ENCODE measurements at regions of chr6 and their contacts with region 1.

Region 1: GRCh38 chr6:148250975-148251685 is 91.5 kb upstream of the SASH1 start:
- DNase-seq: no peak
- H3K4me3 ChIP-seq: no peak overlapping the region
- H3K27ac ChIP-seq: peak overlapping the region; percentile 57 to 81 (median 61)
- H3K4me1 ChIP-seq: peaks cover 39 to 42% of the 10 kb centered on the region in 2 donors
- H3K27me3 ChIP-seq: no peaks in the 10 kb centered on the region
- CTCF ChIP-seq: peak in 4 of 6 experiments; percentile 51 to 65 (median 56)
- POLR2A ChIP-seq: no peak

Region 2: GRCh38 chr6:148177589-148178233 is 73.4 kb before region 1 on chr6:
- intact Hi-C with region 1: loop called (anchors 5 kb)
- DNase-seq: peak; percentile 74 to 81
- H3K4me3 ChIP-seq: no peak overlapping the region
- H3K27ac ChIP-seq: peak overlapping the region in 1 of 3 donors; percentile 1
- H3K4me1 ChIP-seq: peaks cover 0 to 14% of the 10 kb centered on the region in 2 donors
- H3K27me3 ChIP-seq: no peaks in the 10 kb centered on the region
- CTCF ChIP-seq: peak; percentile 77 to 93 (median 79)
- POLR2A ChIP-seq: no peak

Region 3: GRCh38 chr6:148407372-148407771 is 156.2 kb after region 1 on chr6:
- intact Hi-C with region 1: no loop called
- DNase-seq: no peak
- H3K4me3 ChIP-seq: no peak overlapping the region
- H3K27ac ChIP-seq: peak overlapping the region; percentile 81 to 91 (median 87)
- H3K4me1 ChIP-seq: peaks cover 37 to 55% of the 10 kb centered on the region in 2 donors
- H3K27me3 ChIP-seq: no peaks in the 10 kb centered on the region
- CTCF ChIP-seq: no peak
- POLR2A ChIP-seq: no peak

Measured in thyroid gland (tissue), 4 donors.